ENCODE measurements at regions of chr13 and their contacts with region 1.

Region 1: GRCh38 chr13:59686798-59687394 is 476.8 kb downstream of the DIAPH3 start:
- DNase-seq: no peak
- ATAC-seq: no peak
- H3K4me3 ChIP-seq: no peak overlapping the region
- H3K4me3 Mint-ChIP-seq: no peak overlapping the region
- H3K27ac ChIP-seq: no peak overlapping the region
- H3K27ac Mint-ChIP-seq: peak overlapping the region in 1 of 9 donors; percentile 31
- H3K4me1 ChIP-seq: no peaks in the 10 kb centered on the region
- H3K4me1 Mint-ChIP-seq: peaks cover 0 to 4% (median 0%) of the 10 kb centered on the region in 7 donors
- H3K27me3 ChIP-seq: no peaks in the 10 kb centered on the region
- H3K27me3 Mint-ChIP-seq: no peaks in the 10 kb centered on the region

Region 2: GRCh38 chr13:60335531-60335930 is 648.6 kb after region 1 on chr13:
- CTCF ChIA-PET with region 1: no interaction called
- POLR2A ChIA-PET with region 1: no interaction called
- intact Hi-C with region 1: loop called in 1 of 2 experiments (anchors 2 kb)
- DNase-seq: peak in 3 of 9 donors; percentile 3 to 8 (median 4)
- ATAC-seq: no peak
- H3K4me3 ChIP-seq: no peak overlapping the region
- H3K4me3 Mint-ChIP-seq: no peak overlapping the region
- H3K27ac ChIP-seq: no peak overlapping the region
- H3K27ac Mint-ChIP-seq: no peak overlapping the region
- H3K4me1 ChIP-seq: no peaks in the 10 kb centered on the region
- H3K4me1 Mint-ChIP-seq: no peaks in the 10 kb centered on the region
- H3K27me3 ChIP-seq: no peaks in the 10 kb centered on the region
- H3K27me3 Mint-ChIP-seq: peaks cover 6 to 16% (median 11%) of the 10 kb centered on the region in 5 donors

Measured in naive thymus-derived CD4-positive, alpha-beta T cell (primary cell).